CD4-positive, alpha-beta memory T cell (primary cell): ENCODE measurements at regions of chr17 and their contacts with region 1.

Region 1: DNA sequence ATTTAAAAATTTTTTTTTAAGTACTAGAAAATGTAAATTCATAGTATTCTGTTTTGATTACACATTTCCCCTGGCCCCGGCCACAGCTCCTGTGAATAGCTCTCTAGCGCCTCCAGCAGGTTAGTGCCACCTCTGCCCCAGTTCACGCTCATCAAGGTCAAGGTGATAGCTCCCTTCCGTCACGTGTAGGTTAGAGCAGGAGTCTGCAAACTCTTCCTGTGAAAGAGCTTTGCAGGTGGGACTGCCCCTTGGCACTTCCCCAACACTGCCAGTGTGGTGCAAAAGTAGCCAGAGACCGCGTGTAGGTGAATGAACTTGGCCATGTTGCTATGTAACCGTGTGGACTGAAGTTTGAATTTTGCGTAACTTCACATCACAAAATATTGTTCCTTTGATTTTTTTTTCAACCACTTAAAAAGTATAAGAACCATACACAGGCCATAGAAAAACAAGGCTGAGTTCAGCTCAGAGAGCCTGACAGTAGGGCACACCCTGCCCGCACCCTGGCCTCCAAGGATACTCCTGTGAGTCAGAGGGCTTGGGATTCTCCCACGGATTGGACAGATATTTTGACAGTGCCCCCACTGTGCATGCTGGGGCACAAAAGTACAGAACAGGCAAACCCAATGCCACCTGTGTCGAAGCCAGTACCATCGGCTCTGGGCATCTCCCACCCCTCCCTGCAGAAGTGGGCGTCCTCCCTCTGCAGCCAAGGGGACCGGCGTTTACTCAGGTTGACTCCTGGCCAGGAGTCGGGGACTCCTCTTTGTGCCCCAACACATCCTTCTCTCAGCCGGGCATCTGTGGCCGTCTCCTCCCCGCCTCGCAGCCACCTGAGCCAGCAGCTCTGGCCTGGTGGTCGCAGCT is 92.0 kb upstream of the CHMP6 start:
- DNase-seq: peak; percentile 71 to 83 (median 78)
- H3K4me3 ChIP-seq: no peak overlapping the region
- H3K4me3 Mint-ChIP-seq: no peak overlapping the region
- H3K27ac ChIP-seq: no peak overlapping the region
- H3K27ac Mint-ChIP-seq: peak overlapping the region in 5 of 7 donors; percentile 4 to 57 (median 50)
- H3K4me1 ChIP-seq: peaks cover 17% of the 10 kb centered on the region
- H3K4me1 Mint-ChIP-seq: peaks cover 6 to 47% (median 29%) of the 10 kb centered on the region in 4 donors
- H3K27me3 ChIP-seq: no peaks in the 10 kb centered on the region
- H3K27me3 Mint-ChIP-seq: no peaks in the 10 kb centered on the region

Region 2: DNA sequence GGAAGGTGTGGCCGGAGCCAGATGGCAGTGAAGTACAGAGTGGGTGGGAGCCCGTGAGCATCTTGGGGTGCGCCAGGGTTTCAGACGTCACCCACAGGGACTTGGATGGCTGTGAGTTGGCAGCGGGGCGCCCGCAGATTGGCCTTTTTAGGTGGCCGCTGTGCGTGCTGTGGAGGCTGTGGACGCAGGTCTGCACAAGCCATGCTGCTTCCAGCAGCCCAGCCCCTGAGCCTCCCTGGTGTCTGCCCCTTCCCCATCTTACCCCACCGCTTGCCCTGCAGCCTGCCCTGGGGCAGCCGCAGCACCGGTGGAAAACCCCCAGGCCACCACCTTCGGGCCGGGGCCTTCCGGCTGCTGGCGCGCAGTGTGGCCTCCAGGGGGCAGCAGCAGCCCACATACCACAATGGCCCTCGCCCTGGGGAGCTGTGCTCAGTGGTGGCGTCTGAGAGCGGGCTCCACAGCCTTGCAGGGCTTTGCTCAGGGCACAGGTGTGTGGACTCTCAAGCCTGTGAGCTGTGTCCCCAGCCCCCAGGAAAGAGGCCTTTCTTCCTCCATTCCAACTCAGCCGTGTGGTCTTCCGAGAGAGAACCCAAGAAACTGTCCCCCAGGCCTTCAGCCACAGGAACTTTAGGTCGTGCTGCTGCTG is 472.8 kb before region 1 on chr17:
- CTCF ChIA-PET with region 1: interaction called, 23 read pairs
- POLR2A ChIA-PET with region 1: interaction called, 3 read pairs
- intact Hi-C with region 1: loop called (anchors 1 kb)
- DNase-seq: peak; percentile 83 to 87 (median 86)
- H3K4me3 ChIP-seq: no peak overlapping the region
- H3K4me3 Mint-ChIP-seq: no peak overlapping the region
- H3K27ac ChIP-seq: no peak overlapping the region
- H3K27ac Mint-ChIP-seq: peak overlapping the region in 4 of 7 donors; percentile 47 to 80 (median 68)
- H3K4me1 ChIP-seq: peaks cover 13% of the 10 kb centered on the region
- H3K4me1 Mint-ChIP-seq: peaks cover 4 to 13% (median 9%) of the 10 kb centered on the region in 4 donors
- H3K27me3 ChIP-seq: no peaks in the 10 kb centered on the region
- H3K27me3 Mint-ChIP-seq: no peaks in the 10 kb centered on the region

Region 3: DNA sequence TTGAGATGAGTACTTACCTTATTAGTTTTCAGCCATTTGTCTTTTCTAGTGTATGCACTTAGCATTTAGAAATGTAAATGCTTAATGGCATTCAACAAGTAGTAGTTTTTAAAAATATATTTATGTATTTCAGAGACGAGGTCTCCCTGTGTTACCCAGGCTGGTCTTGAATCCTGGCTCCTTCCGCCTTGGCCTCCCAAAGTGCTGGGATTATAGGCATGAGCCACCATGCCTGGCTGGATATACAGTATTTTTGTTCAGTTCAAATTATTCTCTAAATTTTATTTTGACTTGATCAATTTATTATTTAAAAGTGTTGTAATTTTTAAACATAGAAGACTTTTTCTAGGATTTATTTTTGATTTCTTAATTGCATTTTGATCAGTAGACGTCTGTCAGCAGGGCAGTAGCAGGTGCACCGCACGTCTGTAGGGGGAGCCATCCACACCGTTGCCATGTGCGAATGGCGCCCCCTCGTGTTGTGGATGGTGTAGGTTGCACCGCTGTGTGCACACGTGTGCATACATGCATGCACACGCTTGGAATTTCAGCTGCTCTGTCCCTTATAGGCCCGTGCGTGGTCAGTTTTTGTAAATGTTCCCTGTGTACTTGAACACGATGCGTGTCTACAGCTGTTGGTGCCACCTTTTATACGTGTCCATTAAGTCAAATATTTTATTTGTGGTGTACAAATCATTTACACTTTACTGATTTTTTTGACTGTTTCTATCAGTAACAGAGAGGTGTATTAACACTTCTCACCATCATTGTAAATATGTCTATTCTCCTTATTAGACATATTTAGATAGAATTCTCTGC is 324.4 kb before region 1 on chr17:
- CTCF ChIA-PET with region 1: interaction called, 19 read pairs
- POLR2A ChIA-PET with region 1: interaction called, 3 read pairs
- intact Hi-C with region 1: loop called (anchors 1 kb)
- DNase-seq: peak; percentile 83 to 87 (median 83)
- H3K4me3 ChIP-seq: no peak overlapping the region
- H3K4me3 Mint-ChIP-seq: no peak overlapping the region
- H3K27ac ChIP-seq: no peak overlapping the region
- H3K27ac Mint-ChIP-seq: peak overlapping the region in 2 of 7 donors; percentile 35 to 61
- H3K4me1 ChIP-seq: peaks cover 10% of the 10 kb centered on the region
- H3K4me1 Mint-ChIP-seq: peaks cover 8 to 23% (median 13%) of the 10 kb centered on the region in 4 donors
- H3K27me3 ChIP-seq: no peaks in the 10 kb centered on the region
- H3K27me3 Mint-ChIP-seq: no peaks in the 10 kb centered on the region

Region 4: GRCh38 chr17:80855948-80856862 is 43.4 kb before region 1 on chr17:
- CTCF ChIA-PET with region 1: interaction called, 10 read pairs
- POLR2A ChIA-PET with region 1: interaction called, 4 read pairs
- intact Hi-C with region 1: no loop called
- DNase-seq: peak; percentile 34 to 86 (median 59)
- H3K4me3 ChIP-seq: no peak overlapping the region
- H3K4me3 Mint-ChIP-seq: peak overlapping the region in 7 of 8 donors; percentile 3 to 52 (median 40)
- H3K27ac ChIP-seq: peak overlapping the region; percentile 42
- H3K27ac Mint-ChIP-seq: peak overlapping the region; percentile 71 to 90 (median 79)
- H3K4me1 ChIP-seq: peaks cover 27% of the 10 kb centered on the region
- H3K4me1 Mint-ChIP-seq: peaks cover 20 to 53% (median 39%) of the 10 kb centered on the region in 4 donors
- H3K27me3 ChIP-seq: no peaks in the 10 kb centered on the region
- H3K27me3 Mint-ChIP-seq: no peaks in the 10 kb centered on the region

Region 5: DNA sequence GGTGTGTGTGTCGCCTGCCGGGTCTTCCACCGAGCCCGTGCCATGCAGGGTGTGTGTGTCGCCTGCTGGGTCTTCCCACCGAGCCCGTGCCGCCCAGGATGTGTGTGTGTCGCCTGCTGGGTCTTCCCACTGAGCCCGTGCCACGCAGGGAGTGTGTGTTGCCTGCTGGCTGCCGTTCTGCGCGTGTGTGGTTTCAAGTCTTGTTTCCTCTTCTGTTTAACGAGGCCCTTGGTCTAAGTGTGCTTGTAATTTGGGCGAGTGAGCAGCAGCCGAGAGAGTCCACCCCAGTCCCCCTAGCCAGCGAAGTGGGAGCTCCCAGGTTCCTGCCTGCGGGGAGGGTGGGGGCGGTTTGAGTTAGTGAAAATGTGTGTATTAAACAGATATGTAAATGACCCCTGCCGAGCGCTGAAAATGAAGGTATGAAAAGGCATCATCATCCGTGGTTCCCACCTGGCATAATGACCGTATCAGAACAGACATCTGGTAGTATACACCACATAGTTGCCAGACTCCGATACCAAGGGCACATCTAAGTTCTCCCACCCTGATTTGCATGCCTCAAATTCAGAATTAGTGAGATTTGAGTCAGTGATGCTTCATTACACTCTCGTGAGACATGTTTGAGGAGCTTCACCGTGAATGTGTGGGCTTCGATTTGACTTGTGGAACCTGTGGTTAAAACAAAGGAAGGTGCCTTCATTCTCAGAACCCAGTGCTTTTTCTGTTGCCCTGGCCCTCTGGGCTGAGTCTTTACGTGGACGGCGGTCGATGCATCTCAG is 22.5 kb before region 1 on chr17:
- CTCF ChIA-PET with region 1: interaction called, 11 read pairs
- POLR2A ChIA-PET with region 1: no interaction called
- intact Hi-C with region 1: no loop called
- DNase-seq: peak in 3 of 5 donors; percentile 28 to 45 (median 43)
- H3K4me3 ChIP-seq: peak overlapping the region; percentile 14 to 51
- H3K4me3 Mint-ChIP-seq: peak overlapping the region; percentile 79 to 92 (median 87)
- H3K27ac ChIP-seq: peak overlapping the region; percentile 29
- H3K27ac Mint-ChIP-seq: peak overlapping the region; percentile 60 to 95 (median 91)
- H3K4me1 ChIP-seq: peaks cover 33% of the 10 kb centered on the region
- H3K4me1 Mint-ChIP-seq: peaks cover 20 to 51% (median 35%) of the 10 kb centered on the region in 4 donors
- H3K27me3 ChIP-seq: no peaks in the 10 kb centered on the region
- H3K27me3 Mint-ChIP-seq: no peaks in the 10 kb centered on the region